Naive thymus-derived CD4-positive, alpha-beta T cell (primary cell): ENCODE measurements at regions of chr12 and their contacts with region 1.

Region 1: GRCh38 chr12:92570056-92570753 is 132.6 kb upstream of the PLEKHG7 start:
- DNase-seq: peak in 7 of 9 donors; percentile 67 to 86 (median 80)
- ATAC-seq: peak; percentile 92
- H3K4me3 ChIP-seq: no peak overlapping the region
- H3K4me3 Mint-ChIP-seq: no peak overlapping the region
- H3K27ac ChIP-seq: peak overlapping the region; percentile 52
- H3K27ac Mint-ChIP-seq: no peak overlapping the region
- H3K4me1 ChIP-seq: peaks cover 11 to 13% of the 10 kb centered on the region in 2 donors
- H3K4me1 Mint-ChIP-seq: peaks cover 0 to 37% (median 6%) of the 10 kb centered on the region in 7 donors
- H3K27me3 ChIP-seq: no peaks in the 10 kb centered on the region
- H3K27me3 Mint-ChIP-seq: no peaks in the 10 kb centered on the region

Region 2: GRCh38 chr12:91361864-91362263 is 1208.3 kb before region 1 on chr12:
- CTCF ChIA-PET with region 1: interaction called, 13 read pairs
- POLR2A ChIA-PET with region 1: no interaction called
- intact Hi-C with region 1: loop called (anchors 1 to 2 kb)
- DNase-seq: peak in 7 of 9 donors; percentile 15 to 57 (median 46)
- ATAC-seq: peak; percentile 63
- H3K4me3 ChIP-seq: no peak overlapping the region
- H3K4me3 Mint-ChIP-seq: peak overlapping the region in 1 of 10 donors; percentile 11
- H3K27ac ChIP-seq: no peak overlapping the region
- H3K27ac Mint-ChIP-seq: peak overlapping the region in 1 of 9 donors; percentile 41
- H3K4me1 ChIP-seq: no peaks in the 10 kb centered on the region
- H3K4me1 Mint-ChIP-seq: peaks cover 0 to 4% (median 3%) of the 10 kb centered on the region in 7 donors
- H3K27me3 ChIP-seq: no peaks in the 10 kb centered on the region
- H3K27me3 Mint-ChIP-seq: peaks cover 0 to 16% (median 0%) of the 10 kb centered on the region in 5 donors

Region 3: GRCh38 chr12:91577586-91578539 is 992.3 kb before region 1 on chr12:
- CTCF ChIA-PET with region 1: interaction called, 7 read pairs
- POLR2A ChIA-PET with region 1: no interaction called
- intact Hi-C with region 1: loop called (anchors 1 to 5 kb)
- DNase-seq: peak in 6 of 9 donors; percentile 30 to 53 (median 39)
- ATAC-seq: peak; percentile 88
- H3K4me3 ChIP-seq: peak overlapping the region; percentile 39
- H3K4me3 Mint-ChIP-seq: peak overlapping the region; percentile 16 to 93 (median 84)
- H3K27ac ChIP-seq: no peak overlapping the region
- H3K27ac Mint-ChIP-seq: peak overlapping the region; percentile 14 to 94 (median 81)
- H3K4me1 ChIP-seq: peaks cover 0 to 5% of the 10 kb centered on the region in 2 donors
- H3K4me1 Mint-ChIP-seq: peaks cover 12 to 36% (median 19%) of the 10 kb centered on the region in 7 donors
- H3K27me3 ChIP-seq: no peaks in the 10 kb centered on the region
- H3K27me3 Mint-ChIP-seq: peaks cover 0 to 3% (median 0%) of the 10 kb centered on the region in 5 donors

Region 4: DNA sequence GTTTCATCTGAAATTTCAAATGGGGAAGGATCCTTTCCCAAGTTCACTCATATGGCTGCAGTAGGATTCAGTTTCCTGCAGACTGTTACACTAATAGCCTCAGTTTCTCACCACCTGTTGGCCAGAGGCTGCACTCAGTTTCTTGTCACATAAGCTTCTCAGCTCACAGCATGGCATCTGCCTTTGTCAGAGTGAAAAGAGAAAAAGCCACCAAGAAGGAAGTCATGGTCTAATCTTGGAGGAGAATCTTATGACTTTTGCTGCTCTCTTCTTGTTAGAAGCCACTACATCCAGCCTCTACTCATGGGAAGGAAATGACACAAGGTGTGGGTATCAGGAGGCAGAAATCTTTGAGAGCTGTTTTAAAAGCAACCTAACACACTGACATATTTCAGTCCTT is 385.2 kb before region 1 on chr12:
- CTCF ChIA-PET with region 1: no interaction called
- POLR2A ChIA-PET with region 1: no interaction called
- intact Hi-C with region 1: loop called in 1 of 2 experiments (anchors 1 kb)
- DNase-seq: peak in 8 of 9 donors; percentile 30 to 70 (median 56)
- ATAC-seq: peak; percentile 88
- H3K4me3 ChIP-seq: no peak overlapping the region
- H3K4me3 Mint-ChIP-seq: peak overlapping the region; percentile 28 to 77 (median 68)
- H3K27ac ChIP-seq: peak overlapping the region; percentile 74
- H3K27ac Mint-ChIP-seq: peak overlapping the region; percentile 83 to 96 (median 93)
- H3K4me1 ChIP-seq: peaks cover 22 to 29% of the 10 kb centered on the region in 2 donors
- H3K4me1 Mint-ChIP-seq: peaks cover 23 to 71% (median 60%) of the 10 kb centered on the region in 7 donors
- H3K27me3 ChIP-seq: no peaks in the 10 kb centered on the region
- H3K27me3 Mint-ChIP-seq: no peaks in the 10 kb centered on the region

Region 5: GRCh38 chr12:92396647-92397252 is 173.5 kb before region 1 on chr12:
- CTCF ChIA-PET with region 1: interaction called, 9 read pairs
- POLR2A ChIA-PET with region 1: interaction called, 5 read pairs
- intact Hi-C with region 1: loop called in 1 of 2 experiments (anchors 1 kb)
- DNase-seq: no peak
- ATAC-seq: no peak
- H3K4me3 ChIP-seq: no peak overlapping the region
- H3K4me3 Mint-ChIP-seq: peak overlapping the region in 8 of 10 donors; percentile 9 to 76 (median 62)
- H3K27ac ChIP-seq: peak overlapping the region; percentile 85
- H3K27ac Mint-ChIP-seq: peak overlapping the region; percentile 90 to 100 (median 98)
- H3K4me1 ChIP-seq: peaks cover 76 to 84% of the 10 kb centered on the region in 2 donors
- H3K4me1 Mint-ChIP-seq: peaks cover 56 to 100% (median 93%) of the 10 kb centered on the region in 7 donors
- H3K27me3 ChIP-seq: no peaks in the 10 kb centered on the region
- H3K27me3 Mint-ChIP-seq: no peaks in the 10 kb centered on the region

Region 6: GRCh38 chr12:92608151-92609091 is 38.2 kb after region 1 on chr12:
- CTCF ChIA-PET with region 1: no interaction called
- POLR2A ChIA-PET with region 1: no interaction called
- intact Hi-C with region 1: loop called in 1 of 2 experiments (anchors 1 kb)
- DNase-seq: peak in 2 of 9 donors; percentile 6 to 34
- ATAC-seq: peak; percentile 32
- H3K4me3 ChIP-seq: no peak overlapping the region
- H3K4me3 Mint-ChIP-seq: peak overlapping the region in 8 of 10 donors; percentile 10 to 79 (median 66)
- H3K27ac ChIP-seq: no peak overlapping the region
- H3K27ac Mint-ChIP-seq: peak overlapping the region in 7 of 9 donors; percentile 24 to 89 (median 68)
- H3K4me1 ChIP-seq: no peaks in the 10 kb centered on the region
- H3K4me1 Mint-ChIP-seq: peaks cover 9 to 20% (median 12%) of the 10 kb centered on the region in 7 donors
- H3K27me3 ChIP-seq: no peaks in the 10 kb centered on the region
- H3K27me3 Mint-ChIP-seq: no peaks in the 10 kb centered on the region